Psoas muscle (tissue), 8 donors: ENCODE measurements at regions of chr18 and their contacts with region 1.

Region 1: DNA sequence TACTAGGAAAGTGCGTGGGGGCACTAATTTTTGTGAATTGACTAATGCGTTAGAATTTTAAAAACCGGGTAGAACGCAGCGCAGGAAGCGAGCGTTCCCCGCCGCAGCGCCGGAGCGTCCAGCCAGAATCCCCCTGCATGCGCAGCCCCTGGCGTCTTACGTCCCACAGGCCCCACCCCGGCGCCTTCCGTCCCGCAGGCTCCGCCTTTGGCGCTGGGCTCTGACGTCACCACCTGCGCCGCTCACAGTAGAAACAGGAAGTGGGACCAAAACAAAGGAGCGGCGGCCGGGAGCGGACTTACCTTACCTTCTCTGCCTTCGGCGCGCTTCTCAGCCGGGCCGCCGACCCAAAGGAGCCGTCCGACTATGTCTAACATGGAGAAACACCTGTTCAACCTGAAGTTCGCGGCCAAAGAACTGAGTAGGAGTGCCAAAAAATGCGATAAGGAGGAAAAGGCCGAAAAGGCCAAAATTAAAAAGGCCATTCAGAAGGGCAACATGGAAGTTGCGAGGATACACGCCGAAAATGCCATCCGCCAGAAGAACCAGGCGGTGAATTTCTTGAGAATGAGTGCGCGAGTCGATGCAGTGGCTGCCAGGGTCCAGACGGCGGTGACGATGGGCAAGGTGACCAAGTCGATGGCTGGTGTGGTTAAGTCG is at the start of gene CHMP1B:
- DNase-seq: peak; percentile 99
- ATAC-seq: peak; percentile 84 to 89 (median 85)
- H3K4me3 ChIP-seq: peak within 1 kb of the TSS; percentile 91
- H3K27ac ChIP-seq: peak within 1 kb of the TSS; percentile 98
- H3K4me1 ChIP-seq: peaks cover 12% of the 10 kb centered on the region
- H3K27me3 ChIP-seq: no peaks in the 10 kb centered on the region
- CTCF ChIP-seq: no peak
- total RNA-seq, gene CHMP1B: 77.9 to 460 (median 292) TPM

Region 2: GRCh38 chr18:11808001-11808855 is 43.0 kb before region 1 on chr18:
- intact Hi-C with region 1: loop called in 1 of 2 experiments (anchors 5 kb)
- DNase-seq: no peak
- ATAC-seq: no peak
- H3K4me3 ChIP-seq: no peak overlapping the region
- H3K27ac ChIP-seq: no peak overlapping the region
- H3K4me1 ChIP-seq: peaks cover 4% of the 10 kb centered on the region
- H3K27me3 ChIP-seq: no peaks in the 10 kb centered on the region
- CTCF ChIP-seq: no peak